ENCODE measurements at regions of chr1 and their contacts with region 1.

Region 1: DNA sequence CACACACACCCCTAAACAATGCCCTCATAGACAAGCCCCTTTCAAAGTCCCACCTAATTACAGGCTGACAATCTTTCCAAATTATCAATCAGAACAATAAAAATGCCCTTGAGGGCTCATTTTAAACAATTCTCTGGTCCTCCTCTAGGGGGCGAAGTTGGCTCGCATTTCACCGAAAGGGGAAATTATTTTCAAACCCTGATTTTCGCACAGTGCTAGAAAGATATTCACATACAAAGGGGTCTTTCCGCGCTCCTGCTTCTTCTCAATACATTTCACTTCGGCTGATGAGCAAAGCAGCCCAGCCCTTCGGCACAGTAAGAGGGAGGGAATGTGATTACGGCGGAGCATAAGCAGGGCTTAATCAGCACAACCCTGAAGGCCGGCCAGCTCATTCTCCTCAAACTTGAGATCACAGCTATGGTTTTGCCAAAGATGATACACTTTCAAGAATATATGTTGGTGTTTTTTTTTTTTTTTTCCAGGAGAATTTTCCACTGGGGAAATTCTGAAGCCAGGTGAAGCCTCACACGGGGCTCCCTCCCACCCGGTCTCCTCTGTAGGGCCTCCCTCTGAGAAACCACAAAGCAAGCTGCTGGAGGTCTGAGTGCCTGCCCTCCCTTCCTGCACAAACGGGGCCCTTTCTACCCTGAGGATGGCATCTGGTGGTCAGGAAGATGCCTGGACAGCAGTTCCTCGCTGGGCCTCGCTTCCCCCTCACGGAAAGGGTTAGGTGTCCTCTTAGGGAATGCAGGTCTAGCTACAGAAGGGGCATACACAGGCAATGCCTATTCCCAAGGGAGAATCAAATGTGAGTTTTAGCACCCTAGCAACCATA is 66.9 kb downstream of the GNG12 start:
- DNase-seq: peak; percentile 54
- H3K4me3 Mint-ChIP-seq: peak overlapping the region; percentile 11
- H3K27ac Mint-ChIP-seq: no peak overlapping the region
- H3K4me1 Mint-ChIP-seq: peaks cover 14% of the 10 kb centered on the region
- H3K27me3 Mint-ChIP-seq: peaks cover 40% of the 10 kb centered on the region

Region 2: GRCh38 chr1:67535474-67535873 is 230.9 kb before region 1 on chr1:
- CTCF ChIA-PET with region 1: interaction called, 154 read pairs
- POLR2A ChIA-PET with region 1: no interaction called
- intact Hi-C with region 1: no loop called
- DNase-seq: peak; percentile 79
- H3K4me3 Mint-ChIP-seq: no peak overlapping the region
- H3K27ac Mint-ChIP-seq: no peak overlapping the region
- H3K4me1 Mint-ChIP-seq: no peaks in the 10 kb centered on the region
- H3K27me3 Mint-ChIP-seq: peaks cover 4% of the 10 kb centered on the region

Region 3: GRCh38 chr1:67540733-67541125 is 225.6 kb before region 1 on chr1:
- CTCF ChIA-PET with region 1: interaction called, 154 read pairs
- POLR2A ChIA-PET with region 1: no interaction called
- intact Hi-C with region 1: no loop called
- DNase-seq: no peak
- H3K4me3 Mint-ChIP-seq: no peak overlapping the region
- H3K27ac Mint-ChIP-seq: no peak overlapping the region
- H3K4me1 Mint-ChIP-seq: no peaks in the 10 kb centered on the region
- H3K27me3 Mint-ChIP-seq: no peaks in the 10 kb centered on the region

Region 4: GRCh38 chr1:67570473-67571143 is 195.8 kb before region 1 on chr1:
- CTCF ChIA-PET with region 1: interaction called, 71 read pairs
- POLR2A ChIA-PET with region 1: no interaction called
- intact Hi-C with region 1: no loop called
- DNase-seq: no peak
- H3K4me3 Mint-ChIP-seq: no peak overlapping the region
- H3K27ac Mint-ChIP-seq: no peak overlapping the region
- H3K4me1 Mint-ChIP-seq: no peaks in the 10 kb centered on the region
- H3K27me3 Mint-ChIP-seq: no peaks in the 10 kb centered on the region

Region 5: GRCh38 chr1:67824766-67825165 is 58.4 kb after region 1 on chr1:
- CTCF ChIA-PET with region 1: no interaction called
- POLR2A ChIA-PET with region 1: no interaction called
- intact Hi-C with region 1: loop called (anchors 5 kb)
- DNase-seq: no peak
- H3K4me3 Mint-ChIP-seq: no peak overlapping the region
- H3K27ac Mint-ChIP-seq: no peak overlapping the region
- H3K4me1 Mint-ChIP-seq: no peaks in the 10 kb centered on the region
- H3K27me3 Mint-ChIP-seq: peaks cover 4% of the 10 kb centered on the region

Region 6: GRCh38 chr1:67853704-67854103 is 87.3 kb after region 1 on chr1:
- CTCF ChIA-PET with region 1: interaction called, 4 read pairs
- POLR2A ChIA-PET with region 1: no interaction called
- intact Hi-C with region 1: loop called (anchors 5 kb)
- DNase-seq: peak; percentile 19
- H3K4me3 Mint-ChIP-seq: no peak overlapping the region
- H3K27ac Mint-ChIP-seq: no peak overlapping the region
- H3K4me1 Mint-ChIP-seq: no peaks in the 10 kb centered on the region
- H3K27me3 Mint-ChIP-seq: peaks cover 12% of the 10 kb centered on the region

Region 7: GRCh38 chr1:67957066-67957465 is 190.7 kb after region 1 on chr1:
- CTCF ChIA-PET with region 1: no interaction called
- POLR2A ChIA-PET with region 1: no interaction called
- intact Hi-C with region 1: no loop called
- DNase-seq: no peak
- H3K4me3 Mint-ChIP-seq: no peak overlapping the region
- H3K27ac Mint-ChIP-seq: no peak overlapping the region
- H3K4me1 Mint-ChIP-seq: no peaks in the 10 kb centered on the region
- H3K27me3 Mint-ChIP-seq: peaks cover 4% of the 10 kb centered on the region

Region 8: GRCh38 chr1:68120136-68120791 is 353.9 kb after region 1 on chr1:
- CTCF ChIA-PET with region 1: interaction called, 7 read pairs
- POLR2A ChIA-PET with region 1: no interaction called
- intact Hi-C with region 1: loop called (anchors 2 kb)
- DNase-seq: peak; percentile 22
- H3K4me3 Mint-ChIP-seq: no peak overlapping the region
- H3K27ac Mint-ChIP-seq: no peak overlapping the region
- H3K4me1 Mint-ChIP-seq: peaks cover 6% of the 10 kb centered on the region
- H3K27me3 Mint-ChIP-seq: peaks cover 1% of the 10 kb centered on the region